Activated T-helper 1 cell treated with anti-CD3 and anti-CD28 coated beads, Interleukin-12 subunit alpha, Interleukin-12 subunit beta, Interleukin-2, Interleukin-4 antibody, amounts not matched to agents 30 ng/mL and 10 ng/mL and 1 ng/mL, durations not matched to agents 14 hours and 24 hours and 36 hours (primary cell): ENCODE measurements at regions of chr14 and their contacts with region 1.

Region 1: GRCh38 chr14:30621940-30622830 is at the start of gene SCFD1:
- DNase-seq: peak; percentile 94
- H3K4me3 Mint-ChIP-seq: peak within 1 kb of the TSS; percentile 99
- H3K27ac Mint-ChIP-seq: peak within 1 kb of the TSS; percentile 98
- H3K4me1 Mint-ChIP-seq: peaks cover 56% of the 10 kb centered on the region
- H3K27me3 Mint-ChIP-seq: no peaks in the 10 kb centered on the region
- total RNA-seq, gene SCFD1: 73.1 and 77.3 TPM in 2 replicates

Region 2: GRCh38 chr14:30558675-30559555 is 63.3 kb before region 1 on chr14 and contains the start of gene G2E3:
- intact Hi-C with region 1: loop called (anchors 1 kb)
- DNase-seq: peak; percentile 90
- H3K4me3 Mint-ChIP-seq: peak within 1 kb of the TSS; percentile 100
- H3K27ac Mint-ChIP-seq: peak within 1 kb of the TSS; percentile 99
- H3K4me1 Mint-ChIP-seq: peaks cover 33% of the 10 kb centered on the region
- H3K27me3 Mint-ChIP-seq: peaks cover 4% of the 10 kb centered on the region
- total RNA-seq, gene G2E3: 21.5 and 24.1 TPM in 2 replicates

Region 3: DNA sequence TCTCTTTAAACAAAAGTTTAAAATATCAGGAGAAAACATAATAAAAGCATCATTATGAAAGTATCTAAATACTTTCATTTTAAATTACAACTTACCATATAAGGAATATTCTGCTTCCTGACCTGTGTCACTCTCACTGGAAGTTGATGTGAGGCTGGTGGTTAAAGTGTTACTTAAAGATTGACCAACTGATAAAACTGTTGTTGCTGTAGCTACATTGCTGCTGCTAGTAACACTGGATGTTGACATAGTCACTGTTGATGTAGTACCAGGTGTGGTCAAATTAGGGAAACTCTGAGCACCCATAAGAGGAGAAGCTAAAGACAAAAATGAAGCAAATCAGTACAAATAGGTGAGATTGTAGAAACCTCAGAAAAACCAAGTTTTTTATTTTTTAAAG is 505.5 kb after region 1 on chr14:
- intact Hi-C with region 1: loop called (anchors 10 kb)
- DNase-seq: peak; percentile 56
- H3K4me3 Mint-ChIP-seq: peak overlapping the region; percentile 16
- H3K27ac Mint-ChIP-seq: peak overlapping the region; percentile 64
- H3K4me1 Mint-ChIP-seq: peaks cover 31% of the 10 kb centered on the region
- H3K27me3 Mint-ChIP-seq: no peaks in the 10 kb centered on the region